Activated T-helper 1 cell treated with anti-CD3 and anti-CD28 coated beads, Interleukin-12 subunit alpha, Interleukin-12 subunit beta, Interleukin-2, Interleukin-4 antibody, amounts not matched to agents 30 ng/mL and 10 ng/mL and 1 ng/mL, durations not matched to agents 14 hours and 24 hours and 36 hours (primary cell): ENCODE measurements at regions of chr9 and their contacts with region 1.

Region 1: GRCh38 chr9:122810306-122810946 is 10.5 kb downstream of the OR1K1 start:
- DNase-seq: peak; percentile 59
- H3K4me3 Mint-ChIP-seq: no peak overlapping the region
- H3K27ac Mint-ChIP-seq: no peak overlapping the region
- H3K4me1 Mint-ChIP-seq: peaks cover 34% of the 10 kb centered on the region
- H3K27me3 Mint-ChIP-seq: no peaks in the 10 kb centered on the region

Region 2: DNA sequence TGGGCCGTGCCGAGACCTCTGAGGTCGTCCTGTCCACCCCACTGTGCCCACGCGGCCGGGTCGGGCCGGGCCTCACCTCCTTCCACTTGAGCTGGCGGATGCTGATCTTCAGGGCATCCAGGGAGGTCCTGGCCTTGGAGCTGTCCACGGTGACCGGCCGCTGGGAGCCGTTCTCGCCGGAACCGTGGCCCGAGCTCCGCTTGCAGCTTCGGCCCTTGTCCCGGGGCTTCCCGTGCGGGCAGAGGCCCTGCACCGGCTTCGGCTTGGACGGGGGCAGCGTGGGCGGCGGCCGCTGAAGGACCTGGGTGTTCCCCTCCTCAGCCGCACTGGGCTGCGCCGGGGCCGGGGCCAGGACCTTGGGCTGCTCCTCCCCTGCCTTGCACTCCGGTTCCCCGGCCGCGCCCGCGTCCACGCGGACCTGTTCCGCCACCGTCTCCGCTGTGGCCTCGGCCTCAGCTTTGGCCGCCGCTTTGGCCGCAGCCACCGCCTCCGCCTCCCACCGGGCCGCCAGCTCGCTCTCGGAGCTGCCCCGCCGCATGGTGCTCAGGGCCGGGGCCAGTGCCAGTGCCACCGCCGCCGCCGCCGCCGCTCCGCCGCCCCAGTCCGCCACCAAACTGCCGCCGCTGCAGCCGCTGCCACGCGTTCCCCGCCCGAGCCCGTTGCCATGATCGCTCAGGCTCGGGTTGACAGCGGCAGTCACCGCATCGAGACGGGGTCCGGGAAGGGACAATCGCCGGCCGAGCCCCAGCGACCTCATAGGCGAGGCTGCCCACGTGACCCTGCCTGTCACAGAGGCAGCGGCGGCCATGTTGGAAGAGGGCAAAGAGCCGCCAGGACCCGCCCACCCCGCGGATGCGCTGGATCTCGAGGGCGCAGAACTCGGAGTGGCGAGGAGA is 717.6 kb before region 1 on chr9 and contains the start of gene TTLL11:
- intact Hi-C with region 1: loop called (anchors 1 kb)
- DNase-seq: peak; percentile 95
- H3K4me3 Mint-ChIP-seq: peak within 1 kb of the TSS; percentile 84
- H3K27ac Mint-ChIP-seq: peak within 1 kb of the TSS; percentile 73
- H3K4me1 Mint-ChIP-seq: peaks cover 25% of the 10 kb centered on the region
- H3K27me3 Mint-ChIP-seq: peaks cover 10% of the 10 kb centered on the region
- total RNA-seq, gene TTLL11: 3.0 and 4.5 TPM in 2 replicates

Region 3: DNA sequence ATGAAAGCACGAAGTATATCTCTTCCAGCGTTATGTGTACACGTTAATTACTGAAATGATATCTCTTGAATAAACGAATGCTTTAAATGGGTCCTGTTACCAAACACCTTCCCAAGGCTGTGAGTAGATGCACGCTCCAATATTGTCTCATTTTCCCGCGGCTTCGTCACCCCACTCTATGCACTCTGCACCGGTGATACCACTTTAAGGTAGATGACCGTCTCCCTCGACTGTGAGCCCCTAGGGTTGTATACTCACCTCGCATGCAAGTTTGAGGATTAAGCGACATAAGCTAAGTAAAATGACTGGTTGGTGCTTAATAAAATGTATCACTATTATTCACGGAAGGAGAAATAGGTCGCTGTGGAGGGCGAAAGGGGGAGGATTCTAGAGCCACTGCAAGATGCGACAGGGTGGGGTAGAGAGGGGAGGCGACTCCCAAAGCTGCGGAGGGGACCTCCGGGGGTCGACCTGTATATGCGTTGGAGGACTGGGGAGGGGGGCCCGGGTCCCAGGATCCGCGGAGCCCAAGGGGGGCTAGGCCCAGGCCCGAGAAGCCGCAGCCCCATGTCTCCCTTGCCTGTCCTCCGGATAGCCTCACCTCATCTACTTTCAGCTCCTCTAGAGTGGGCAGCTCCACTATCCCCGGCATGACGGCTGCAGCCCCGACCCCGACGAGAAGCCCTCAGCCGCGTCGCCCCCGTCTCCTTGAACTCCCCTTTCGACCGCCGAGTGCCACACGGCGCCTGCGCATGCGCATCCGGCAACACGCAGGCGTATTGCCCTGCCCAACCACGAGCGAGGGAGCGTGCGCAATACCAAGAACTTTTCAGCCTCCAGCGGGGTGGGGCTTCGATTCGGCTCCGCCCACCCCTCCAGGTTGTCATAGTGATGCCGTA is 651.2 kb before region 1 on chr9 and contains the starts of genes MORN5 and NDUFA8:
- intact Hi-C with region 1: loop called (anchors 1 kb)
- DNase-seq: peak; percentile 95
- H3K4me3 Mint-ChIP-seq: peak within 1 kb of the TSS; percentile 93
- H3K27ac Mint-ChIP-seq: peak within 1 kb of the TSS; percentile 87
- H3K4me1 Mint-ChIP-seq: peaks cover 35% of the 10 kb centered on the region
- H3K27me3 Mint-ChIP-seq: peaks cover 12% of the 10 kb centered on the region
- total RNA-seq, gene MORN5: not detected in 2 replicates
- total RNA-seq, gene NDUFA8: 49.6 and 51.6 TPM in 2 replicates

Region 4: DNA sequence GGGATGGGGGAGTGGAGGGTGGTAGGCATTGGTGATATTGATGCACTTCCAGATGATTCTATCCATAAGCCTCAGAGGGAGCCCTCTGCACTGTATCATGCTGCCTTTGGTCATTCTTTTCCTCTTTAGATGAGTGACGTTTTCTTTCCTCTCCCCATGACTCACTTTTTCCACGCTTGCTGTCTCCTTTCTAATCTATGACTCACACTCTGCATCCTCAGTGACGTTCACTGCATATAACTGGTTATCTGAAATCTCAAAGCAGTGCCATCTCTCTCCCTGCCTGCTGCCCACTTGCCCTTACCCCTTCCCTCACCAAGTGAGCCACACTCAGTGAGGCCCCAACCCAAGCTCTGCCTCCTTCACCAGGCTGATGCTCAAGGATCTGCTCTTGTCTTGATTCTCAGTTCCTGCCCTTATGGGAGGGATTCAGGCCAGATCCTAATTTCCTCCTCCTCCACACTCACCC is 408.0 kb before region 1 on chr9:
- intact Hi-C with region 1: loop called (anchors 1 kb)
- DNase-seq: peak; percentile 33
- H3K4me3 Mint-ChIP-seq: peak overlapping the region; percentile 5
- H3K27ac Mint-ChIP-seq: peak overlapping the region; percentile 86
- H3K4me1 Mint-ChIP-seq: peaks cover 25% of the 10 kb centered on the region
- H3K27me3 Mint-ChIP-seq: peaks cover 6% of the 10 kb centered on the region

Region 5: GRCh38 chr9:122827761-122828093 is 17.3 kb after region 1 on chr9:
- intact Hi-C with region 1: loop called (anchors 1 kb)
- DNase-seq: no peak
- H3K4me3 Mint-ChIP-seq: peak overlapping the region; percentile 96
- H3K27ac Mint-ChIP-seq: peak overlapping the region; percentile 84
- H3K4me1 Mint-ChIP-seq: peaks cover 36% of the 10 kb centered on the region
- H3K27me3 Mint-ChIP-seq: no peaks in the 10 kb centered on the region

Region 6: GRCh38 chr9:122940603-122941559 is 130.5 kb after region 1 on chr9 and contains the start of gene RABGAP1:
- intact Hi-C with region 1: no loop called
- DNase-seq: peak; percentile 97
- H3K4me3 Mint-ChIP-seq: peak within 1 kb of the TSS; percentile 98
- H3K27ac Mint-ChIP-seq: peak within 1 kb of the TSS; percentile 76
- H3K4me1 Mint-ChIP-seq: peaks cover 27% of the 10 kb centered on the region
- H3K27me3 Mint-ChIP-seq: peaks cover 1% of the 10 kb centered on the region
- total RNA-seq, gene RABGAP1: 26.6 and 30.2 TPM in 2 replicates

Region 7: DNA sequence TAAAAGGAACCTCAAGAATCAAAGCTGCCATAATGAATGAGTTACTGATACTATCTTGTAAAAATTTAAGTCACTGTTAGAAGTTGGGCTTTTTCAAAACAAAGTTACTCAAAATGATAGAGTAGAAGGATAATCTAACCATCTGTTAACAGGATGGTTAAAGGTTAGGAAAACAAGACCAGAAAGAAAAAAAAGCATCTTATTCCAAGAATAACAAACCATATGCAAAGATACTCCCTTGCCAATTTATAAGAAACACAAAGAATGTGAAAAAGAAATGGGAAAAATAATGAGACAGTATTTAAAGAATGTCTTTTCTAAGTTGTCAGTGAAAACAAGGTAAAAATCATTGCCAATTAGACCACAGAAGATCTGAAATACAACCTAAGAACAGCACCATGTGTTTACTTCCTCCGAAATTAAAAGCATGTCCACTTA is 406.7 kb after region 1 on chr9:
- intact Hi-C with region 1: no loop called
- DNase-seq: no peak
- H3K4me3 Mint-ChIP-seq: no peak overlapping the region
- H3K27ac Mint-ChIP-seq: no peak overlapping the region
- H3K4me1 Mint-ChIP-seq: peaks cover 8% of the 10 kb centered on the region
- H3K27me3 Mint-ChIP-seq: no peaks in the 10 kb centered on the region

Region 8: GRCh38 chr9:123338710-123339665 is 528.6 kb after region 1 on chr9:
- intact Hi-C with region 1: loop called (anchors 1 kb)
- DNase-seq: peak; percentile 62
- H3K4me3 Mint-ChIP-seq: peak overlapping the region; percentile 83
- H3K27ac Mint-ChIP-seq: peak overlapping the region; percentile 93
- H3K4me1 Mint-ChIP-seq: peaks cover 40% of the 10 kb centered on the region
- H3K27me3 Mint-ChIP-seq: no peaks in the 10 kb centered on the region